A673 (cell line): ENCODE measurements at regions of chr16 and their contacts with region 1.

Region 1: DNA sequence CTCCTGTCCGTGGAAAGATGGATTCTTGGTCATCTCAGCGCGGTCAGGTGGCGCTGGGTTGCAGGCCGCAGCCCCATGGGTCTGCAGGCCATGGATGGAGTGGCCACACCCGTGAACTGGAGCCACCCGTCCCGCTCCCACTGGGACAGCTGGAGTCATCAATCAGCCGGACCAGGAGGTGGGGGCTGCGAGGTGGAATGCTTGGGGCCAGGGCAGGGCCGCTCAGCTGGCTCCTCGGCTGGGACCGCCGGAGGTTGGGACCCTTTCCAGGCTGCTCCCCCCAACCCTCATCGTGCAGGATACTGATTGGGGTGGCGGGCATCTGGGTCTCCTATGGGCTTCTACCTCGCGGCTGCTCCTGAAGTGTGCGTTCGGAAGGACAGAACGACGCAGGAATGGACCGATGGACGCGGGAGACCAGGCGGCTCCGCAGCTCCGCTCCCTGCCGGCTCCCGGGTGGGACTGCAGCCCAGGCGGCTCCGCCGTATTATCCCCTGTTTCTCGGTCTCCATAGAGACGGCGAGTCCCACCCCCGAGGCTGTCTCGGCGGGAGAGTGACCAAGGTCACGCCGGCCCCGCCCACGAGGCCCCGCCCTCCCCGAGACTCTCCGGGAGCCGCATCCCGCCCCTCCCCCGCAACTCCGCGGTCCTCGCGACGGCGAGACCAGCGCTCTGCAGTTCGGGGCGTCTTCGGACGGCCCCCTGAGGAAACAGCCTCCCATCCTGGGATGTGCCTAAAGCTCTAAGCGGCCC is at the start of gene TPPP3:
- DNase-seq: peak; percentile 82
- H3K4me3 ChIP-seq: peak within 1 kb of the TSS; percentile 31
- H3K27ac ChIP-seq: no peak within 1 kb of the TSS
- H3K4me1 ChIP-seq: peaks cover 14% of the 10 kb centered on the region
- H3K27me3 ChIP-seq: peaks cover 8% of the 10 kb centered on the region
- CTCF ChIP-seq: peak; percentile 63
- total RNA-seq, gene TPPP3: 0.28 and 0.31 TPM in 2 replicates

Region 2: GRCh38 chr16:67248401-67249177 is 144.6 kb before region 1 on chr16 and contains the start of gene SLC9A5:
- CTCF ChIA-PET with region 1: interaction called, 10 read pairs
- POLR2A ChIA-PET with region 1: no interaction called
- intact Hi-C with region 1: no loop called
- DNase-seq: no peak
- H3K4me3 ChIP-seq: peak within 1 kb of the TSS; percentile 90
- H3K27ac ChIP-seq: peak within 1 kb of the TSS; percentile 79
- H3K4me1 ChIP-seq: peaks cover 50% of the 10 kb centered on the region
- H3K27me3 ChIP-seq: no peaks in the 10 kb centered on the region
- CTCF ChIP-seq: peak; percentile 19; the same call in 1 of the 2 replicates
- total RNA-seq, gene SLC9A5: 2.4 and 3.6 TPM in 2 replicates

Region 3: DNA sequence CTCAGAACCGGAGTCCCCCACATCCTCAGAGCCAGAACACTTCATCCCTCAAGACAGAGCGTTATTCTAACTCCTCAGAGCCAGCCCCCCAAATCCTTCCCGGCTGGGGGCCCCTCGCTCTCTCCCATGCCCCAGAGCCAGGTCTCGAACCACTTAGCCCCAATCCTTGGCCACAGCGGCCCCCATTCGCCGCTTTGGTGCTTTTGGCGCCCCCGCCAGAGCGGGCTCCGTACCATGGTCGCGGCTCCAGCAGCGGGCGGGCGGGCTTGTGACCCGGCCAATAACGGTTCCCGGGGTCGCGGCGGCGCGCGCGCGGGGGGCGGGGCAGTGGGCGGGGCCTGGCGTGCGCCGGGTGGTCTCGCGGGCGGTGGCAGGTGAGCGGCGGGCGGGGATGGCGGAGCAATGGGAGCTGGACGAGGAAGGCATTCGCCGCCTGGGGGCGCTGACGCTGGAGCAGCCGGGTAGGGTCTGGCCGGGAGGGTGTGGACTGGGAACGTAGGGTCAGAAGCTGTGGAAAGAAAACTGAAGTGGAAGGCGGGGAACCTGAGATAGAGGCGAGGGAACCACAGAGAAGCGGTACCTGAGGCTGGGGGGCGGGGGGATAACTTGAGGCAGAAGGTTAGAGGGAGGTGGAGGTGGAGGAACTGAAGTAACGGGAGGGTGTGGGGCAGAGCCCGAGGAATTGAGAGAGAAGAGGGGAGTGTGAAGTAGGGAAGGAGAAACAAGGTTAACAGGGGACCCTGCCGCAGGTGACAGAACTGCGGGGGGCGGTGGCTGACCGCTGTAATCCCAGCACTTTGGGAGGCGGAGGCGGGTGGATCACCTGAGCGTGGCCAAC is 66.5 kb before region 1 on chr16 and contains the starts of genes KCTD19 and LRRC36:
- CTCF ChIA-PET with region 1: interaction called, 20 read pairs
- POLR2A ChIA-PET with region 1: no interaction called
- intact Hi-C with region 1: no loop called
- DNase-seq: peak; percentile 67
- H3K4me3 ChIP-seq: peak within 1 kb of the TSS; percentile 57
- H3K27ac ChIP-seq: no peak within 1 kb of the TSS
- H3K4me1 ChIP-seq: no peaks in the 10 kb centered on the region
- H3K27me3 ChIP-seq: peaks cover 19% of the 10 kb centered on the region
- CTCF ChIP-seq: peak; percentile 68
- total RNA-seq, gene KCTD19: 0.32 TPM in 1 of 2 replicates, not detected in the other
- total RNA-seq, gene LRRC36: not detected in 2 replicates

Region 4: GRCh38 chr16:67419502-67420275 is 26.5 kb after region 1 on chr16:
- CTCF ChIA-PET with region 1: no interaction called
- POLR2A ChIA-PET with region 1: interaction called, 12 read pairs
- intact Hi-C with region 1: no loop called
- DNase-seq: peak; percentile 65
- H3K4me3 ChIP-seq: no peak overlapping the region
- H3K27ac ChIP-seq: no peak overlapping the region
- H3K4me1 ChIP-seq: peaks cover 29% of the 10 kb centered on the region
- H3K27me3 ChIP-seq: no peaks in the 10 kb centered on the region
- CTCF ChIP-seq: no peak